ENCODE measurements at regions of chr4 and their contacts with region 1.

Region 1: GRCh38 chr4:60081839-60082238 is 1118.3 kb upstream of the ADGRL3 start:
- DNase-seq: no peak
- ATAC-seq: no peak
- H3K4me3 ChIP-seq: no peak overlapping the region
- H3K27ac ChIP-seq: no peak overlapping the region
- H3K4me1 ChIP-seq: no peaks in the 10 kb centered on the region
- H3K27me3 ChIP-seq: no peaks in the 10 kb centered on the region
- CTCF ChIP-seq: no peak

Region 2: GRCh38 chr4:59973492-59973891 is 108.3 kb before region 1 on chr4:
- CTCF ChIA-PET with region 1: no interaction called
- POLR2A ChIA-PET with region 1: interaction called, 14 read pairs
- intact Hi-C with region 1: no loop called
- DNase-seq: no peak
- ATAC-seq: no peak
- H3K4me3 ChIP-seq: no peak overlapping the region
- H3K27ac ChIP-seq: no peak overlapping the region
- H3K4me1 ChIP-seq: no peaks in the 10 kb centered on the region
- H3K27me3 ChIP-seq: no peaks in the 10 kb centered on the region
- CTCF ChIP-seq: no peak